ENCODE measurements at regions of chr7 and their contacts with region 1.

Region 1: GRCh38 chr7:67045496-67045995 is 48.9 kb downstream of the TYW1 start:
- DNase-seq: no peak
- ATAC-seq: no peak
- H3K4me3 ChIP-seq: no peak overlapping the region
- H3K27ac ChIP-seq: no peak overlapping the region
- H3K4me1 ChIP-seq: peaks cover 0 to 15% (median 7%) of the 10 kb centered on the region in 12 donors
- H3K27me3 ChIP-seq: no peaks in the 10 kb centered on the region
- CTCF ChIP-seq: no peak
- POLR2A ChIP-seq: no peak

Region 2: GRCh38 chr7:66952343-66953043 is 93.1 kb before region 1 on chr7:
- intact Hi-C with region 1: no loop called
- DNase-seq: no peak
- ATAC-seq: peak in 1 of 4 donors; percentile 27
- H3K4me3 ChIP-seq: no peak overlapping the region
- H3K27ac ChIP-seq: no peak overlapping the region
- H3K4me1 ChIP-seq: peaks cover 0 to 6% (median 0%) of the 10 kb centered on the region in 12 donors
- H3K27me3 ChIP-seq: no peaks in the 10 kb centered on the region
- CTCF ChIP-seq: no peak
- POLR2A ChIP-seq: no peak

Region 3: GRCh38 chr7:67302113-67303039 is 256.8 kb after region 1 on chr7:
- intact Hi-C with region 1: loop called in 1 of 10 experiments (anchors 10 kb)
- DNase-seq: peak; percentile 98 to 100 (median 99)
- ATAC-seq: peak; percentile 95 to 97 (median 97)
- H3K4me3 ChIP-seq: peak overlapping the region; percentile 55 to 99 (median 80)
- H3K27ac ChIP-seq: peak overlapping the region; percentile 74 to 98 (median 95)
- H3K4me1 ChIP-seq: peaks cover 0 to 28% (median 13%) of the 10 kb centered on the region in 12 donors
- H3K27me3 ChIP-seq: no peaks in the 10 kb centered on the region
- CTCF ChIP-seq: peak in 11 of 12 donors; percentile 20 to 61 (median 30)
- POLR2A ChIP-seq: peak in 1 of 2 donors; percentile 74